K562 (cell line): ENCODE measurements at regions of chr12 and their contacts with region 1.

Region 1: DNA sequence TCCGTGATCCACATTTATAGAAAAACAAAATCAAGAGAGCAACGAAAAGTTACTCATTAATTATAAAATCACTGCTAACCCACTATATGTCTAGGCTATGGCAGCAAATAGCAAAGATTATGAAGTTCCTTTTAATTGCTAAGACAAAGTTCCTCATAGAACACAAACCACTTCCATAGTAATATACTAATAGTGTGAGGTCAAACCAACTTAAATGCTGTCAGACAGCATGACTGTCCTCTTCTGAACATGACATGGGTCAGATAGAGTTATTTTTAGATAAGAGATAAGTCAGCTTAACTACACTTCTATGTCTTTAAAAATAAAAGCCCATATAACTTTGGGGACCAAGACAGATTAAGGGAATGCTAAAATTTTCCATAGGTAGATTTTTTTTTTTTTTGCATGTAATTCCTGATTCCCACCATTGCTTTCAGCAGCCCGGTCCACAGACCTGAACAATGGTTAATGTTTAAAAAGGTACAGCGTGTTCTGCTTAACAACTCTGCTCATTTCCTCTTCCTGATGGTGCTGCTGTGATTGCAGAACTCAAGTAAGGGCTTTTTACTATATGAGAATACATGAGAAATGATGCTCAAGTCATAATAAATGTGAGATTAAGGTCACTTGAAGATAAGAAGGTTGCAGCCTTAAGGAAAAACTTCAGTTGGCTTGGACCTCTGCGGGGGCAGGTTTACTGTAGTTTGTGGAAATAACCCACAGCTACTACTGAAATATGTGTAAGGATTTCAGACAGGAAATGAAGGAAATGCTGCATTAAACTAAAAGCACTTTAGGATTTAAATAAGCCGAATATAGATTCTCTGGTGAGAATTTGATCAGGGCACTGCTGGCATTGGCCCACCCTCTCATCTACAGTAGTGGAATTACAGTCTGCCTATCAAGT is 37.7 kb upstream of the DUSP6 start:
- DNase-seq: no peak
- ATAC-seq: no peak
- H3K4me3 ChIP-seq: no peak overlapping the region
- H3K27ac ChIP-seq: no peak overlapping the region
- H3K4me1 ChIP-seq: peaks cover 2 to 45% of the 10 kb centered on the region in 2 experiments; a peak in 3 of 5 replicates
- H3K27me3 ChIP-seq: no peaks in the 10 kb centered on the region
- CTCF ChIP-seq: no peak
- EP300 ChIP-seq: no peak
- POLR2A ChIP-seq: no peak
- RAD21 ChIP-seq: no peak

Region 2: DNA sequence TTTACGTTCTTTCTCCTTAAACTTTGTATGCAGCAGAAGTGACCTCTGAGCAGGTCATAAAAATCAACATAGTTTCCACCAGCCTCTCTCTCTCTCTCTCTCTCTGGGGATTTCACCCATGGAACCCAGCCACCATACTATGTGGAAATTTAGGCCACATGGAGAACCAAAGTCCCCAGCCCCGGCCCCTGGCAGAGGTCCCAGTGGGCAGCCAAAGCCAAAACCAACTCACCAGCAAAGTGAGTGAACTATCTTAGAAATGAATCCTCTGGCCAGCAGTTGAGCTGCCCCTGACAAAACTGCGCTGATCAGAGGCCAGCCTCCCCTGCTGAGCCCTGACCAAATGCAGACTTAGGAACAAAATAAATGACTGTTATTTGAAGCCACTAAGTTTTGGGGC is 46.9 kb before region 1 on chr12:
- CTCF ChIA-PET with region 1: no interaction called
- POLR2A ChIA-PET with region 1: no interaction called
- in situ Hi-C with region 1: no loop called
- intact Hi-C with region 1: loop called (anchors 5 kb)
- DNase-seq: no peak
- ATAC-seq: no peak
- H3K4me3 ChIP-seq: no peak overlapping the region
- H3K27ac ChIP-seq: no peak overlapping the region
- H3K4me1 ChIP-seq: peaks cover 0 to 26% of the 10 kb centered on the region in 2 experiments; a peak in 4 of 5 replicates
- H3K27me3 ChIP-seq: no peaks in the 10 kb centered on the region
- CTCF ChIP-seq: no peak
- EP300 ChIP-seq: no peak
- POLR2A ChIP-seq: no peak
- RAD21 ChIP-seq: no peak